ENCODE measurements at regions of chr7 and their contacts with region 1.

Region 1: DNA sequence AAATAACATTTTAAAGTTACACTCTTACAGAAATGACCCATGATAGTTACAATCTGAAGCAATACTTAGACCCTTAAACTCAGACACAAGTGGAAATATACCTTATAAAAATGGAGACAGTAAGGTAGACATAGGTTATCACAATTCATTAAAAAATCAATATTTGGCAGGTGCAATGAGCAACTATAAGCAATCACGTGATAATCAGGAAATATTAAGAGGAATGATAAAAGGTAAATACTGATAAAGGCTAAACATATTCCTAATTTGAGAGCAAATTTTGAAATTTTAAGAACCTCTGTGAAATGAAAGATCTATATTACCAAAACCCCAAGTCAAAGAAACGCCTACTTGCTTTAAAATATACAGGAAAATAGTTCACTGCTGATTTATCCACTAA is 37.3 kb downstream of the HGF start:
- DNase-seq: no peak
- ATAC-seq: no peak
- H3K4me3 ChIP-seq: no peak overlapping the region
- H3K27ac ChIP-seq: no peak overlapping the region
- H3K4me1 ChIP-seq: no peaks in the 10 kb centered on the region
- H3K27me3 ChIP-seq: no peaks in the 10 kb centered on the region
- CTCF ChIP-seq: no peak
- EP300 ChIP-seq: no peak
- POLR2A ChIP-seq: no peak
- RAD21 ChIP-seq: no peak

Region 2: DNA sequence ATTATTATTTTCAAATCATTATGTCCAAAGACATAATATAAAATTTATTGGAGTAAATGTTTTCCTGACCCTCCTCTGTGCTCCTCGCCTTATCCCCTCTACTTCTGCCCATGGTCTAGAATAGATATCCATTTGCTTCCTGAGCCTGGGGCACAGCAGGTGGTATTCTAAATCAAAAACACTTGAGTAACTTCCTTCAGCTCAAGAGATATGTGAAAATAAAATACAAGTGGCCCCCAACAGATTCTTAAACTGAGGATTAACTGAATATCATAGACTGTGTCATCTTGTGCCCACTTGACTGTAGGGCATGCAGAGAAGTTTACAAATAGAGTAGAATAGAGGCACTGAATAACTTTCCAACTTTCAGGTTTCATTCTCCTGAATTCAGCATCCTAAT is 21.8 kb before region 1 on chr7:
- CTCF ChIA-PET with region 1: no interaction called
- POLR2A ChIA-PET with region 1: no interaction called
- in situ Hi-C with region 1: no loop called
- intact Hi-C with region 1: loop called (anchors 1 kb)
- DNase-seq: no peak
- ATAC-seq: no peak
- H3K4me3 ChIP-seq: no peak overlapping the region
- H3K27ac ChIP-seq: no peak overlapping the region
- H3K4me1 ChIP-seq: no peaks in the 10 kb centered on the region
- H3K27me3 ChIP-seq: no peaks in the 10 kb centered on the region
- CTCF ChIP-seq: no peak
- EP300 ChIP-seq: no peak
- POLR2A ChIP-seq: no peak
- RAD21 ChIP-seq: no peak